ENCODE measurements at regions of chr14 and their contacts with region 1.

Region 1: GRCh38 chr14:31084385-31084784 is 58.2 kb upstream of the STRN3 start:
- DNase-seq: no peak
- ATAC-seq: no peak
- H3K4me3 ChIP-seq: no peak overlapping the region
- H3K27ac ChIP-seq: peak overlapping the region; percentile 54; the same call in 1 of the 2 replicates
- H3K4me1 ChIP-seq: no peaks in the 10 kb centered on the region
- H3K27me3 ChIP-seq: no peaks in the 10 kb centered on the region
- CTCF ChIP-seq: 0 out of 2 replicates have a peak, but pooled peaks have one; percentile 15

Region 2: GRCh38 chr14:30982533-30982932 is 101.9 kb before region 1 on chr14:
- CTCF ChIA-PET with region 1: interaction called, 7 read pairs
- POLR2A ChIA-PET with region 1: no interaction called
- in situ Hi-C with region 1: no loop called
- intact Hi-C with region 1: loop called (anchors 5 kb)
- DNase-seq: no peak
- ATAC-seq: no peak
- H3K4me3 ChIP-seq: no peak overlapping the region
- H3K27ac ChIP-seq: no peak overlapping the region
- H3K4me1 ChIP-seq: peaks cover 6% of the 10 kb centered on the region; the same call in 1 of the 2 replicates
- H3K27me3 ChIP-seq: no peaks in the 10 kb centered on the region
- CTCF ChIP-seq: no peak

Measured in Panc1 (cell line).